ENCODE measurements at regions of chr19 and their contacts with region 1.

Region 1: GRCh38 chr19:5790573-5791520 is at the start of gene DUS3L:
- DNase-seq: peak; percentile 95
- H3K4me3 Mint-ChIP-seq: peak within 1 kb of the TSS; percentile 98
- H3K27ac Mint-ChIP-seq: peak within 1 kb of the TSS; percentile 100
- H3K4me1 Mint-ChIP-seq: peaks cover 5% of the 10 kb centered on the region
- H3K27me3 Mint-ChIP-seq: no peaks in the 10 kb centered on the region
- total RNA-seq, gene DUS3L: 85.9 and 87.1 TPM in 2 replicates

Region 2: GRCh38 chr19:5622463-5623396 is 168.1 kb before region 1 on chr19 and contains the starts of genes SAFB and SAFB2:
- intact Hi-C with region 1: loop called (anchors 1 kb)
- DNase-seq: peak; percentile 100
- H3K4me3 Mint-ChIP-seq: peak within 1 kb of the TSS; percentile 100
- H3K27ac Mint-ChIP-seq: peak within 1 kb of the TSS; percentile 100
- H3K4me1 Mint-ChIP-seq: peaks cover 63% of the 10 kb centered on the region
- H3K27me3 Mint-ChIP-seq: peaks cover 3% of the 10 kb centered on the region
- total RNA-seq, gene SAFB: 143 and 146 TPM in 2 replicates
- total RNA-seq, gene SAFB2: 104 and 106 TPM in 2 replicates

Region 3: DNA sequence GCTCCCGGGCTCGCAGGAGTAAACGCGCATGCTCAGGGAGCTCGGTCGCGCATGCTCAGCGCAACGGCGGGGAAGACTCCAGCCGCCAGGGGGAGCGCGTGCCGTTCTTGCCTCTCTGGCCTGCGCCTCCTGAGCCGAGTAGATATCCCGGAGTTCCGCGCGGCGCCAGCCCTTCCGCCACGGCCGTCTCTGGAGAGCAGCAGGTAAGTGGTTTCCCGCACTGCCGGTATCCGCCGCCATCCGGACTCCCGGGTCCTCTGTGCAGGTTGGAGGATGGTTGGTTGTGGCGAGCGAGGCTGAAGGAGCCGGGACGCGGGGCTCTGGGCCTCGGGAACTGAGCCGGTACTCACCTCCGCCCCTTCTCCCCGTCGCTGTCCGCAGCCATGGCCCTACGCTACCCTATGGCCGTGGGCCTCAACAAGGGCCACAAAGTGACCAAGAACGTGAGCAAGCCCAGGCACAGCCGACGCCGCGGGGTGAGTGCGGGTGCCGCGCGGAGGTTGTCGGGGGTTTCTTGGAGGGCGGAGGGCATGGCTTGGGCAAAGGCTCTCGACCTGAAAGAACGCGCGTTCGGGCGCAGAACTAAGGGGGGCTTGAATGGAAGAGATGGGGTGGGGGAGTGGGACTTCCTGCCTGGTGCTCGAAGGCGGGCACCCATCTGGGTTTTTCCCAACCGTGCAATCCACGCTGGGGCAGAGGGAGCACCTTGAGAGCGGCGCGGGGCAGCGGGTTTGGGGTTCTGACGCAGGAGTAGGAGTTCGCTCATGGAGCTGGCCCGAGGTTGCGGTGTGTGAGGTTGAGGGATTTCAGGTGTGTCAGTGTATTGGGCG is 100.5 kb before region 1 on chr19 and contains the start of gene RPL36:
- intact Hi-C with region 1: loop called (anchors 1 kb)
- DNase-seq: peak; percentile 98
- H3K4me3 Mint-ChIP-seq: peak within 1 kb of the TSS; percentile 99
- H3K27ac Mint-ChIP-seq: peak within 1 kb of the TSS; percentile 95
- H3K4me1 Mint-ChIP-seq: peaks cover 9% of the 10 kb centered on the region
- H3K27me3 Mint-ChIP-seq: no peaks in the 10 kb centered on the region
- total RNA-seq, gene RPL36: 1,000 and 1,001 TPM in 2 replicates

Region 4: GRCh38 chr19:5803752-5804515 is 13.1 kb after region 1 on chr19:
- intact Hi-C with region 1: loop called (anchors 1 kb)
- DNase-seq: peak; percentile 92
- H3K4me3 Mint-ChIP-seq: peak overlapping the region; percentile 80
- H3K27ac Mint-ChIP-seq: peak overlapping the region; percentile 63
- H3K4me1 Mint-ChIP-seq: peaks cover 13% of the 10 kb centered on the region
- H3K27me3 Mint-ChIP-seq: peaks cover 35% of the 10 kb centered on the region

Region 5: GRCh38 chr19:5977785-5978605 is 187.1 kb after region 1 on chr19 and contains the start of gene RANBP3:
- intact Hi-C with region 1: loop called (anchors 1 kb)
- DNase-seq: peak; percentile 100
- H3K4me3 Mint-ChIP-seq: peak within 1 kb of the TSS; percentile 98
- H3K27ac Mint-ChIP-seq: peak within 1 kb of the TSS; percentile 92
- H3K4me1 Mint-ChIP-seq: peaks cover 54% of the 10 kb centered on the region
- H3K27me3 Mint-ChIP-seq: no peaks in the 10 kb centered on the region
- total RNA-seq, gene RANBP3: 122 and 126 TPM in 2 replicates

Region 6: DNA sequence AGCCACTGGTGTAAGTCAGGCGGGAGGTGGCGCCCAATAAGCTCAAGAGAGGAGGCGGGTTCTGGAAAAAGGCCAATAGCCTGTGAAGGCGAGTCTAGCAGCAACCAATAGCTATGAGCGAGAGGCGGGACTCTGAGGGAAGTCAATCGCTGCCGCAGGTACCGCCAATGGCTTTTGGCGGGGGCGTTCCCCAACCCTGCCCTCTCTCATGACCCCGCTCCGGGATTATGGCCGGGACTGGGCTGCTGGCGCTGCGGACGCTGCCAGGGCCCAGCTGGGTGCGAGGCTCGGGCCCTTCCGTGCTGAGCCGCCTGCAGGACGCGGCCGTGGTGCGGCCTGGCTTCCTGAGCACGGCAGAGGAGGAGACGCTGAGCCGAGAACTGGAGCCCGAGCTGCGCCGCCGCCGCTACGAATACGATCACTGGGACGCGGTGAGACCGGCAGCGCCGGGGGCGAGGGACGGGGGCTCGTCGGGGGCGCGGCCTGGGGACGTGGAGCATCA is 581.8 kb after region 1 on chr19 and contains the start of gene ALKBH7:
- intact Hi-C with region 1: loop called (anchors 2 kb)
- DNase-seq: peak; percentile 95
- H3K4me3 Mint-ChIP-seq: peak within 1 kb of the TSS; percentile 81
- H3K27ac Mint-ChIP-seq: peak within 1 kb of the TSS; percentile 81
- H3K4me1 Mint-ChIP-seq: peaks cover 11% of the 10 kb centered on the region
- H3K27me3 Mint-ChIP-seq: no peaks in the 10 kb centered on the region
- total RNA-seq, gene ALKBH7: 24.8 and 27.1 TPM in 2 replicates

Measured in activated T-helper 1 cell treated with anti-CD3 and anti-CD28 coated beads, Interleukin-12 subunit alpha, Interleukin-12 subunit beta, Interleukin-2, Interleukin-4 antibody, amounts not matched to agents 30 ng/mL and 10 ng/mL and 1 ng/mL, durations not matched to agents 14 hours and 24 hours and 36 hours (primary cell).